Naive thymus-derived CD4-positive, alpha-beta T cell (primary cell): ENCODE measurements at regions of chr21 and their contacts with region 1.

Region 1: GRCh38 chr21:33360881-33361602 is 36.3 kb downstream of the IFNAR1 start:
- DNase-seq: peak; percentile 76 to 88 (median 84)
- ATAC-seq: peak; percentile 86
- H3K4me3 ChIP-seq: peak overlapping the region; percentile 76
- H3K4me3 Mint-ChIP-seq: peak overlapping the region; percentile 81 to 96 (median 88)
- H3K27ac ChIP-seq: peak overlapping the region; percentile 63
- H3K27ac Mint-ChIP-seq: peak overlapping the region; percentile 76 to 97 (median 92)
- H3K4me1 ChIP-seq: peaks cover 7 to 12% of the 10 kb centered on the region in 2 donors
- H3K4me1 Mint-ChIP-seq: peaks cover 14 to 25% (median 20%) of the 10 kb centered on the region in 7 donors
- H3K27me3 ChIP-seq: no peaks in the 10 kb centered on the region
- H3K27me3 Mint-ChIP-seq: no peaks in the 10 kb centered on the region

Region 2: DNA sequence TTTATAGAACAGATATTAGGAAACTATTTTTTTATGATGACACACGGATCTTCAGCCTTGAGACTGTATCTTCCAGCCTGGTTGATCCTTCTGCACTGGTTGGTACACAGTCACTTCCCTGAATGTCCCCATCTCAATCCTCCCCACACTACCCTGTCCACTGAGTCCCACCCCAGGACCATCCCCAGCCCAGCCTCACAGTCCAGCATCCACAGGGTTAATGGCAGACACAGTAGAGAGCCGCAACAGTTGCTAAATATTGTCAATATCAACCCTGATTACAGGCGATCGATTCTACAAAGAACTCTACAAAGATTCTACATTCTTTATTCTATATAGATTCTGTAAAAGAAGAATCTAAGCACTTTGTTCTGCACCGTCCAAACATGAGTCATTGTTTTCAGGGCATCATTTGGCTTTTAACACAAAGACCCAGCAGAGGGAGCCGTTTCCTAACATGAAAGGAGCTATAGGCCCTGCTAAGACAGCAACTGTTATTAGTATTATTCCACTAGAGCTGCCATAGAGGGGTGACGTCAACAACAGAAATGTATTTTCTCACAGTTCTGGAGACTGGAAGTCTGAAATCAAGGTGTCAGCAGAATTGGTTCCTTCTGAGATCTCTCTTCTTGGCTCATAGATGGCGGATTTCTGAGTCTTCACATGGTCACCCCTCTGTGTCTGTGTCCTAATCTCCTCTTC is 161.4 kb before region 1 on chr21:
- CTCF ChIA-PET with region 1: interaction called, 25 read pairs
- POLR2A ChIA-PET with region 1: interaction called, 10 read pairs
- intact Hi-C with region 1: loop called (anchors 1 kb)
- DNase-seq: peak; percentile 31 to 88 (median 81)
- ATAC-seq: peak; percentile 91
- H3K4me3 ChIP-seq: no peak overlapping the region
- H3K4me3 Mint-ChIP-seq: no peak overlapping the region
- H3K27ac ChIP-seq: no peak overlapping the region
- H3K27ac Mint-ChIP-seq: peak overlapping the region in 7 of 9 donors; percentile 22 to 87 (median 52)
- H3K4me1 ChIP-seq: peaks cover under 1 to 9% of the 10 kb centered on the region in 2 donors
- H3K4me1 Mint-ChIP-seq: peaks cover 24 to 53% (median 42%) of the 10 kb centered on the region in 7 donors
- H3K27me3 ChIP-seq: no peaks in the 10 kb centered on the region
- H3K27me3 Mint-ChIP-seq: peaks cover 0 to 31% (median 0%) of the 10 kb centered on the region in 5 donors

Region 3: DNA sequence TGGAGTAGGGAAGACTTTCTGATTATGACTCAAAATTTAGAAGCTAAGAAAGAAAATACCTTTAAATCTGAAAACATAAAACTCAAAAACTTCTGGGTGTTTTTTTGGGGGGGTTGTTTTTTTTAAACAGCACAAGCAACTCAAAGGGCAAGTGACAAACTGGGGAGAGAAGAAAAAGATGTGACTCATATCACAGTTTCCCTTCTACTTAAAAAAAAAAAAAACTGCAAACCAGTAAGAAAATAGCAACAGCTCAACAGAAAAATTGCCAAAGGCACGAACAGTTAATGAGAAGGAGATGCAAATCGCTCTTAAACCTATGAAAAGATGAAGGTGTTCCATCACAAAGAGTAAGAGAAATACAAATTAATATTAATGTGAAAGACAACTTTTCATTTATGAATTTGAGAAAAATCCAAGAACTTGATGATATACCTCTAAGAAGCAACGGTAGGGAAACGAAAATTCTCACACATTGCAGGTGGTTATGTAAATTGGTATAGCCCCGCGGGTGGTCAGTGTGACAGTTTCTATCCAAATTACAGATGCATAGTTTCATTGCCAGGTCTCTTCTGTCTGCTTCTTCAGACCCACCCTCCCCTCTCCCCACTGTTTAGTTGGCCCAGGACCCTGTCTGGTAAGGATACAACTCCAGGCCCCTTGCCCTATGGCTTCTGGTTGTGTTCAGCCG is 122.3 kb before region 1 on chr21:
- CTCF ChIA-PET with region 1: interaction called, 3 read pairs
- POLR2A ChIA-PET with region 1: interaction called, 11 read pairs
- intact Hi-C with region 1: loop called in 1 of 2 experiments (anchors 10 kb)
- DNase-seq: peak in 2 of 9 donors; percentile 13 to 39
- ATAC-seq: peak; percentile 73
- H3K4me3 ChIP-seq: peak overlapping the region; percentile 26
- H3K4me3 Mint-ChIP-seq: peak overlapping the region in 9 of 10 donors; percentile 46 to 84 (median 70)
- H3K27ac ChIP-seq: peak overlapping the region; percentile 60
- H3K27ac Mint-ChIP-seq: peak overlapping the region; percentile 43 to 96 (median 90)
- H3K4me1 ChIP-seq: peaks cover 65 to 81% of the 10 kb centered on the region in 2 donors
- H3K4me1 Mint-ChIP-seq: peaks cover 63 to 92% (median 85%) of the 10 kb centered on the region in 7 donors
- H3K27me3 ChIP-seq: no peaks in the 10 kb centered on the region
- H3K27me3 Mint-ChIP-seq: no peaks in the 10 kb centered on the region

Region 4: GRCh38 chr21:33299181-33299752 is 61.8 kb before region 1 on chr21:
- CTCF ChIA-PET with region 1: interaction called, 8 read pairs
- POLR2A ChIA-PET with region 1: interaction called, 18 read pairs
- intact Hi-C with region 1: no loop called
- DNase-seq: peak in 7 of 9 donors; percentile 52 to 70 (median 62)
- ATAC-seq: peak; percentile 86
- H3K4me3 ChIP-seq: peak overlapping the region; percentile 33
- H3K4me3 Mint-ChIP-seq: peak overlapping the region; percentile 47 to 85 (median 72)
- H3K27ac ChIP-seq: peak overlapping the region; percentile 58
- H3K27ac Mint-ChIP-seq: peak overlapping the region; percentile 81 to 90 (median 85)
- H3K4me1 ChIP-seq: peaks cover 6 to 36% of the 10 kb centered on the region in 2 donors
- H3K4me1 Mint-ChIP-seq: peaks cover 36 to 77% (median 63%) of the 10 kb centered on the region in 7 donors
- H3K27me3 ChIP-seq: no peaks in the 10 kb centered on the region
- H3K27me3 Mint-ChIP-seq: no peaks in the 10 kb centered on the region

Region 5: DNA sequence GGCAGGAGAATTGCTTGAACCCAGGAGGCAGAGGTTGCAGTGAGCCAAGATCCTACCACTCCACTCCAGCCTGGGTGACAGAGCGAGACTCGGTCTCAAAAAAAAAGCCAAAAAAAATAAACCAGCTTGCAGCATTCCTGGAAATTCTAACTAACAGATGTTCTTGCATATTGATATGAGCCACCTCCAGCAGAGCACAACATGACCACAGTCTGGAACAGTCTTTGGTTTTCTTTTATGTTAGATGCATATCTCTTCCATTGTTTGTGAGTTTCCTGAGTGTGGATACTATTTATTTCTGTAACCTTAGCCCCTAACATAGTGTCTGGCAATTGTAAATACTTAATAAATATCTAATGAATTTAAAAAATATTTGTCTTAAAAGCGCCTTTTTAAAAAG is 12.3 kb before region 1 on chr21:
- CTCF ChIA-PET with region 1: interaction called, 15 read pairs
- POLR2A ChIA-PET with region 1: interaction called, 20 read pairs
- intact Hi-C with region 1: no loop called
- DNase-seq: no peak
- ATAC-seq: no peak
- H3K4me3 ChIP-seq: no peak overlapping the region
- H3K4me3 Mint-ChIP-seq: no peak overlapping the region
- H3K27ac ChIP-seq: no peak overlapping the region
- H3K27ac Mint-ChIP-seq: peak overlapping the region in 5 of 9 donors; percentile 19 to 90 (median 74)
- H3K4me1 ChIP-seq: peaks cover 0 to 14% of the 10 kb centered on the region in 2 donors
- H3K4me1 Mint-ChIP-seq: peaks cover 6 to 42% (median 25%) of the 10 kb centered on the region in 7 donors
- H3K27me3 ChIP-seq: no peaks in the 10 kb centered on the region
- H3K27me3 Mint-ChIP-seq: no peaks in the 10 kb centered on the region

Region 6: DNA sequence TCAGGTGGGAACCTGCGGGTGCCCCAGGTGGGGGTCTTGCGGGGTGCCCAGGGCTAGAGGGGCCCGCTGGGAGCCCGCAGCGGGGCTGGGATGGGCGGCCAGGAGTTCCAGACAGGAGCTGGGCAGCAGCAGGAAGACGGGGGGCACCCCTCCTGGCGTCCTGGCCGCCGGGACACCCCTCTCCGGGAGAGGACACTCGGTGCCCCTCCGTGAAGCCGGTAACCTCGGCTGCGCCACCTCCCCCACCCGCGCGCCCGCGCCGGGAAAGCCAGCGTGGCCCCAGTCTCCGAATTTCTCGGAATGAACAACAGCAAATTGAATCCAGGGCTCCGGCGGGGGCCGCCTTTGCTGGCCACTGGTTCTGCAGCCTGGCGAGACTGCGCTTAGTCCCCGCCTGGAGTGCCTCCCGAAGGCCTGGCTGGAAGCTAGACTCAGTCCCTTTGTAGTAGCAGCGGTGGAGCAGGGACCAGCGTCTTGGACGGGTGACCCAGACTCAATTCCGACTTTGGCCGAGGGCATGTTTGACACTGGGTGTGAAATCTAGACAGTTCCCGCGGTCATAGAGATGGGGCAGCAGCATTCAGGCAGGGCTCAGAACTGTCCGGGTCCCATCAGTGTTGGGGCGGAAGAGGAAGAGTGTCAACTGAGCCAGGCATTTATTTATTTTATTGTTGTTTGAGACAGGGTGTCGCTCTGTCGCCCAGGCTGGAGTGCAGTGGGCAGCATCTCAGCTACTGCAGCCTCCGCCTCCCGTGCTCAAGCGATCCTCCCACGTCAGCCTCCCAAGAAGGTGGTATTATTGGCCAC is 42.9 kb after region 1 on chr21:
- CTCF ChIA-PET with region 1: interaction called, 6 read pairs
- POLR2A ChIA-PET with region 1: interaction called, 35 read pairs
- intact Hi-C with region 1: loop called in 1 of 2 experiments (anchors 1 kb)
- DNase-seq: peak in 7 of 9 donors; percentile 21 to 43 (median 29)
- ATAC-seq: peak; percentile 30
- H3K4me3 ChIP-seq: peak overlapping the region; percentile 77
- H3K4me3 Mint-ChIP-seq: peak overlapping the region; percentile 87 to 99 (median 97)
- H3K27ac ChIP-seq: peak overlapping the region; percentile 84
- H3K27ac Mint-ChIP-seq: peak overlapping the region; percentile 4 to 98 (median 94)
- H3K4me1 ChIP-seq: peaks cover 16 to 25% of the 10 kb centered on the region in 2 donors
- H3K4me1 Mint-ChIP-seq: peaks cover 25 to 60% (median 54%) of the 10 kb centered on the region in 7 donors
- H3K27me3 ChIP-seq: no peaks in the 10 kb centered on the region
- H3K27me3 Mint-ChIP-seq: peaks cover 0 to 63% (median 0%) of the 10 kb centered on the region in 5 donors

Region 7: DNA sequence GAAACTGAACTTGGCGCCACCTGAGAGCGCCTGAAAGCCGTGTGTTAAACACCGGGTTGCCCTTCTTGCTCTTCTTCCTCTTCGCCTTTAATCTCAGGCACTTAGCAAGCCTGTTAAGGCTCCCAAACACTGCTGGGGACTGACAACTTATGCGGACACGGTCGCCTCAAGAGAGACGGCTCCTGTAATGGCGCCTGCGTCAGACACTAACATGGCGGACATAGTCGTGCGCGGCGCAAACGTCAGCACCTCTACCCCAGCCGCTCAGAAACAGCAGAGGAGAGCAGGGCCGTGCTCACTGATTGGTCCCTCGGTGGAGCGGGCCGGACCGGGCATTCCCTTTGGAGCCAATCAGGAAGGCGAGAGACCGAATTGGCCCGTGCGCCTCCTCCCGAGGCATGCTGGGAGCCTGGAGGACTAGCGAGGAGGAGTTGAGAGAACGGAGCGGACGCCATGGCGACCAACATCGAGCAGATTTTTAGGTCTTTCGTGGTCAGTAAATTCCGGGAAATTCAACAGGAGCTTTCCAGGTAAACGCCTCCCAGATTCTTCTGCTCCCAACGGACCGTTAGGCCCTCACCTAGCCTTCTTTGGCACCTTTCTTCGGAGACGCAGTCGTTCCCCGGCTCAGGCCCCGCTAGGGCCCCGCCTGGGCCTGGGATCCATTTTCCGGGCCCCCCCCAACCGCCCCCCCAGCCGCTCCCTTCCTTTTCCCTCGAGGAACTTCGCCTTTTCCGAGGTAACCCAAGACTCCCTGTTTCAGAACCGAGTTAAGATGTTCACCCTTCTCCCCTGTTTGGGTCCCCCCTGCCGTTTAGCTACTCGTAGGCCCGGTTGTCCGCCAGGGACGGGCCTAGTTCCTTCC is 181.8 kb after region 1 on chr21 and contains the start of gene SON:
- CTCF ChIA-PET with region 1: no interaction called
- POLR2A ChIA-PET with region 1: no interaction called
- intact Hi-C with region 1: loop called (anchors 2 kb)
- DNase-seq: peak; percentile 87 to 99 (median 98)
- ATAC-seq: peak; percentile 94
- H3K4me3 ChIP-seq: peak within 1 kb of the TSS; percentile 95
- H3K4me3 Mint-ChIP-seq: peak within 1 kb of the TSS; percentile 90 to 100 (median 97)
- H3K27ac ChIP-seq: peak within 1 kb of the TSS; percentile 99
- H3K27ac Mint-ChIP-seq: peak within 1 kb of the TSS; percentile 99 to 100 (median 99)
- H3K4me1 ChIP-seq: peaks cover 20 to 30% of the 10 kb centered on the region in 2 donors
- H3K4me1 Mint-ChIP-seq: peaks cover 29 to 54% (median 45%) of the 10 kb centered on the region in 7 donors
- H3K27me3 ChIP-seq: no peaks in the 10 kb centered on the region
- H3K27me3 Mint-ChIP-seq: peaks cover 0 to 5% (median 0%) of the 10 kb centered on the region in 5 donors
- total RNA-seq, gene SON: 337 to 497 (median 431) TPM